Right cardiac atrium (tissue), 5 donors: ENCODE measurements at regions of chr4 and their contacts with region 1.

Region 1: DNA sequence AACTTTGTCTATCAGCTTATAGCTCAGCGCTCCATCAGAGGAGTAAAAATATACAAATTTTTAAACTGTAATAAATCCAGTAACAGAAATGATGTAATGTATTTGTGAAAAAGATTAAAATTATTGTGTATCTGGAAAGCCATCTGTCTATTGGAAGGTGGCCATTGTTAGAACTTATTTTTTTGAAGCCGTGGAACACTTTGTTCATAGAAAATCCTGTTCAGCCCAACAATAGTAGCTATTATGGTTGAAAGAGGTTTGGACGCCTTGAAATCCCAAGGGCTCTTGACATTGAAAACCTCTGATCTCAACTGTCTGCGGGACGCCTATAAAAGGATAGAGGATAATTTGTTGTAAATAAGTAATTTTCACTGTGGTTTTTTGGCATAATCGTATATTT is 98.3 kb downstream of the RAPGEF2 start:
- DNase-seq: no peak
- ATAC-seq: peak; percentile 55
- H3K4me3 ChIP-seq: no peak overlapping the region
- H3K27ac ChIP-seq: no peak overlapping the region
- H3K4me1 ChIP-seq: peaks cover 6% of the 10 kb centered on the region
- H3K27me3 ChIP-seq: no peaks in the 10 kb centered on the region

Region 2: GRCh38 chr4:158850800-158851644 is 350.1 kb before region 1 on chr4:
- intact Hi-C with region 1: loop called in 2 of 4 experiments (anchors 5 kb)
- DNase-seq: no peak
- ATAC-seq: no peak
- H3K4me3 ChIP-seq: no peak overlapping the region
- H3K27ac ChIP-seq: no peak overlapping the region
- H3K4me1 ChIP-seq: peaks cover 2% of the 10 kb centered on the region
- H3K27me3 ChIP-seq: no peaks in the 10 kb centered on the region

Region 3: DNA sequence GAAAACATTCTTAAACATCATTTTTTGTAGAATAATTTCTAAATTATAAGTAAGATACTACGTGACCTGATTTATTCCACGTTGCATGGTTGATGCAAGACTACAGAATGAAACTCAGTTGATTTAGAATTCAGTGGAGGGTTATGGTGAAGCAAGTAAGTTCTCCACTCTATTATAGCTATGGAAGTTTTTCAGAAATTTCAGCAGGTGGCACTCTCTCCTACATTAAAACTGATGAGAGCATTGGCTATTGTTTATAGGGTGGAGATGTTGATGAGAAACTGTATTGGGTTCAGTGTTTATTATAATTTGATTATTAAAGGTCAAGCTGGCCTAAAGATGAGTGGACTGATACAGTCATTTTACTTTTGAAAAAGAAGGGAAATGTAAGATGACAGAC is 344.3 kb before region 1 on chr4:
- intact Hi-C with region 1: loop called in 3 of 4 experiments (anchors 5 to 10 kb)
- DNase-seq: no peak
- ATAC-seq: peak; percentile 68 to 78
- H3K4me3 ChIP-seq: no peak overlapping the region
- H3K27ac ChIP-seq: no peak overlapping the region
- H3K4me1 ChIP-seq: no peaks in the 10 kb centered on the region
- H3K27me3 ChIP-seq: no peaks in the 10 kb centered on the region

Region 4: GRCh38 chr4:159051245-159052071 is 149.7 kb before region 1 on chr4:
- intact Hi-C with region 1: no loop called
- DNase-seq: no peak
- ATAC-seq: no peak
- H3K4me3 ChIP-seq: no peak overlapping the region
- H3K27ac ChIP-seq: no peak overlapping the region
- H3K4me1 ChIP-seq: no peaks in the 10 kb centered on the region
- H3K27me3 ChIP-seq: no peaks in the 10 kb centered on the region

Region 5: GRCh38 chr4:159256036-159256435 is 54.9 kb after region 1 on chr4:
- intact Hi-C with region 1: no loop called
- DNase-seq: no peak
- ATAC-seq: no peak
- H3K4me3 ChIP-seq: no peak overlapping the region
- H3K27ac ChIP-seq: no peak overlapping the region
- H3K4me1 ChIP-seq: peaks cover 6% of the 10 kb centered on the region
- H3K27me3 ChIP-seq: no peaks in the 10 kb centered on the region